ENCODE measurements at regions of chr10 and their contacts with region 1.

Region 1: DNA sequence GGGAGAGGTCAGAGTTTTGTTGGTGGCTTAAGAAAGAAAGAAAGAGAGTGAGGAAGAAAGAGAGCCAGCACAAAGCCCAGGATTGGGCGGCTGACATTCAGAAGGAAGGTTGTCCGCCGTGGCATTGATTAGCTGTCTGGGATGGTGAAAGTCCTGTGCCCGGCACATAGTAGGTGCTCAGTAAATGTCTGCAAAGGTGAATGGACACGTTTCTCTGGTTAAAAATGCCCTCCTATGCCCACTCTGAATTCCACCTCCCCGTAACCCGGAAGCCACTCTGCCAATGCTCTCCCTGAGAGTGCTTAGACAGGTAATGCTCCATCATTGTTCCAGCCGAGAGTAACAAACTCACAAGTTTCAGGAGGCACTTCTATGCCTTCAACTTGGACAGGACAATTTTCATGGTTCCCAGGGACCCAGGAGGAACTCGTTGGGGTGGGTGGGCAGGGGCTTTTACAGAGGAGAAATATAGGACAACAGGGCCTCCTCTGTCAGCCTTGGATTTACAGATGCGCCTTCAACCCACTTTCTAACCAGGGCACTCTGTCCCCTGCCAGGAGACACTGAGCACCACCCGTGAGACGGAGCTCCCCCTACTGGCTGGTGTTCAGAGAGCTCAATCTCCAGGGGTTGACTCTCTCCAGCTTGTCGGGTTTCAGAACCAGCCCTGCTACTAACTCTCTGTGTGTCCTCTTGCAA is 411.5 kb upstream of the ZMIZ1 start:
- DNase-seq: peak; percentile 12 to 70 (median 53)
- ATAC-seq: peak; percentile 85
- H3K4me3 ChIP-seq: no peak overlapping the region
- H3K4me3 Mint-ChIP-seq: no peak overlapping the region
- H3K27ac ChIP-seq: no peak overlapping the region
- H3K27ac Mint-ChIP-seq: no peak overlapping the region
- H3K4me1 ChIP-seq: no peaks in the 10 kb centered on the region
- H3K4me1 Mint-ChIP-seq: peaks cover 0 to 1% (median 0%) of the 10 kb centered on the region in 7 donors
- H3K27me3 ChIP-seq: no peaks in the 10 kb centered on the region
- H3K27me3 Mint-ChIP-seq: peaks cover 7 to 25% (median 10%) of the 10 kb centered on the region in 5 donors

Region 2: DNA sequence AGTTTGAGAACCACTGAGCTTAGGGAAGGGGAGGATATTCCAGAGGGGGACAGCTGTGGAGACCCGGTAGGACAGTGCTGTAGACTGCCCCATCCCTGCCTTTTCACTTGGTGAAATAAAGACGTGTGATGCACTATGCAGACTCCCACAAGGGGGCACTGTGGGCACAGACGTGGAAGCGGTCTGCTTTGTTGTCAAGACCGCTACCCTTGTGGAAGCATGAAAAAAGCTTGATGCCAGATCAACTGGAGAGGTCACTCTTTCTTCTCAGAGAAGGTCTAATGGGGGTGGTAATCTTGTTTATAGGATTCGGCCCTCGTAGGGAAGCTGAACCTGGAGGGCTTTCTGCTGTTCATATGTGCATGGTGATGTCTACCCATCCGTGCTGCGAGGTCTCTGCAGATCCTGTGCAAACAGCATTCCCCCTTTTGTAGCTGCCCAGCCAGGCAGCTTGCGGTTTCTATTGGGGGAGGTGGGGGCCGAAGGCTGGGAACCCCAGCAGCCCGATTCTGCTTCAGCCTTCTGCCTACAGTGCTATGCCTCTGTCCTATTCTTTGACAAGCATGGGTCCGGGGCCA is 609.9 kb before region 1 on chr10:
- CTCF ChIA-PET with region 1: interaction called, 16 read pairs
- POLR2A ChIA-PET with region 1: no interaction called
- intact Hi-C with region 1: loop called in 1 of 2 experiments (anchors 1 kb)
- DNase-seq: peak; percentile 65 to 80 (median 74)
- ATAC-seq: peak; percentile 92
- H3K4me3 ChIP-seq: no peak overlapping the region
- H3K4me3 Mint-ChIP-seq: peak overlapping the region in 2 of 10 donors; percentile 11 to 27
- H3K27ac ChIP-seq: no peak overlapping the region
- H3K27ac Mint-ChIP-seq: peak overlapping the region in 2 of 9 donors; percentile 4 to 9
- H3K4me1 ChIP-seq: no peaks in the 10 kb centered on the region
- H3K4me1 Mint-ChIP-seq: peaks cover 5 to 26% (median 16%) of the 10 kb centered on the region in 7 donors
- H3K27me3 ChIP-seq: no peaks in the 10 kb centered on the region
- H3K27me3 Mint-ChIP-seq: no peaks in the 10 kb centered on the region

Region 3: DNA sequence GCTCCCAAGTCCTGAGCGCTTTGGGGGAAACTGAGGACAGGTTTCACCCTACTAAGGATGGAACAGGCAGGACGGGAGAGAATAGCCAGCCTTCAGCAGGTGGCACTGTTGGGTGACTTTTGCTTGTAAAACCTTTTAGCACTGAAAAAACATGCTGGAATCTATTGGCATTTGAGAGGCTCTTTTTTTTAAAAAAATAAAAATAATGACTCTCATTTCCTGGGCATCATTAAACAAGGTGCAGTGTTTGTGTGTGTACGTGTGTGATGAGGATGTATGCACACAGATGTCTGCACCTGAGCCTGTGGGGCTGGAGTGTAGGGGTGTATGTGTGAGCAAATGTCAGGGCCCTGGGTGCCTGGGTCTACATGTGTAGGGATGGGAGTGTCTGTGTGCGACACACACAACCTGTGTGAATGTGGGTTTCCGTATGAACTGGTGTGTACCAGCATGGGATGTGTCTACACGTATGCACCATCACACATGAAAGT is 445.7 kb before region 1 on chr10:
- CTCF ChIA-PET with region 1: no interaction called
- POLR2A ChIA-PET with region 1: no interaction called
- intact Hi-C with region 1: loop called in 1 of 2 experiments (anchors 1 kb)
- DNase-seq: peak in 1 of 9 donors; percentile 12
- ATAC-seq: no peak
- H3K4me3 ChIP-seq: no peak overlapping the region
- H3K4me3 Mint-ChIP-seq: no peak overlapping the region
- H3K27ac ChIP-seq: no peak overlapping the region
- H3K27ac Mint-ChIP-seq: no peak overlapping the region
- H3K4me1 ChIP-seq: no peaks in the 10 kb centered on the region
- H3K4me1 Mint-ChIP-seq: peaks cover 0 to 2% (median 0%) of the 10 kb centered on the region in 7 donors
- H3K27me3 ChIP-seq: no peaks in the 10 kb centered on the region
- H3K27me3 Mint-ChIP-seq: peaks cover 9 to 19% (median 15%) of the 10 kb centered on the region in 5 donors

Region 4: GRCh38 chr10:78258323-78259030 is 398.8 kb before region 1 on chr10:
- CTCF ChIA-PET with region 1: no interaction called
- POLR2A ChIA-PET with region 1: no interaction called
- intact Hi-C with region 1: loop called in 1 of 2 experiments (anchors 1 kb)
- DNase-seq: peak in 1 of 9 donors; percentile 12
- ATAC-seq: no peak
- H3K4me3 ChIP-seq: no peak overlapping the region
- H3K4me3 Mint-ChIP-seq: no peak overlapping the region
- H3K27ac ChIP-seq: no peak overlapping the region
- H3K27ac Mint-ChIP-seq: no peak overlapping the region
- H3K4me1 ChIP-seq: no peaks in the 10 kb centered on the region
- H3K4me1 Mint-ChIP-seq: peaks cover 0 to 5% (median 0%) of the 10 kb centered on the region in 7 donors
- H3K27me3 ChIP-seq: no peaks in the 10 kb centered on the region
- H3K27me3 Mint-ChIP-seq: peaks cover 0 to 3% (median 0%) of the 10 kb centered on the region in 5 donors

Region 5: GRCh38 chr10:78491812-78492211 is 165.5 kb before region 1 on chr10:
- CTCF ChIA-PET with region 1: no interaction called
- POLR2A ChIA-PET with region 1: no interaction called
- intact Hi-C with region 1: no loop called
- DNase-seq: no peak
- ATAC-seq: no peak
- H3K4me3 ChIP-seq: no peak overlapping the region
- H3K4me3 Mint-ChIP-seq: no peak overlapping the region
- H3K27ac ChIP-seq: no peak overlapping the region
- H3K27ac Mint-ChIP-seq: no peak overlapping the region
- H3K4me1 ChIP-seq: no peaks in the 10 kb centered on the region
- H3K4me1 Mint-ChIP-seq: no peaks in the 10 kb centered on the region
- H3K27me3 ChIP-seq: no peaks in the 10 kb centered on the region
- H3K27me3 Mint-ChIP-seq: peaks cover 14 to 40% (median 26%) of the 10 kb centered on the region in 5 donors